ENCODE measurements at regions of chr6 and their contacts with region 1.

Region 1: GRCh38 chr6:34610819-34611477 is 54.8 kb upstream of the SPDEF start:
- DNase-seq: no peak
- ATAC-seq: no peak
- H3K4me3 Mint-ChIP-seq: no peak overlapping the region
- H3K27ac Mint-ChIP-seq: no peak overlapping the region
- H3K4me1 Mint-ChIP-seq: peaks cover 9% of the 10 kb centered on the region
- H3K27me3 Mint-ChIP-seq: no peaks in the 10 kb centered on the region
- CTCF ChIP-seq: no peak

Region 2: GRCh38 chr6:34055223-34055933 is 555.6 kb before region 1 on chr6:
- CTCF ChIA-PET with region 1: no interaction called
- POLR2A ChIA-PET with region 1: no interaction called
- intact Hi-C with region 1: loop called (anchors 5 kb)
- DNase-seq: peak; percentile 56
- ATAC-seq: peak; percentile 84
- H3K4me3 Mint-ChIP-seq: no peak overlapping the region
- H3K27ac Mint-ChIP-seq: no peak overlapping the region
- H3K4me1 Mint-ChIP-seq: no peaks in the 10 kb centered on the region
- H3K27me3 Mint-ChIP-seq: peaks cover 21% of the 10 kb centered on the region
- CTCF ChIP-seq: no peak

Region 3: DNA sequence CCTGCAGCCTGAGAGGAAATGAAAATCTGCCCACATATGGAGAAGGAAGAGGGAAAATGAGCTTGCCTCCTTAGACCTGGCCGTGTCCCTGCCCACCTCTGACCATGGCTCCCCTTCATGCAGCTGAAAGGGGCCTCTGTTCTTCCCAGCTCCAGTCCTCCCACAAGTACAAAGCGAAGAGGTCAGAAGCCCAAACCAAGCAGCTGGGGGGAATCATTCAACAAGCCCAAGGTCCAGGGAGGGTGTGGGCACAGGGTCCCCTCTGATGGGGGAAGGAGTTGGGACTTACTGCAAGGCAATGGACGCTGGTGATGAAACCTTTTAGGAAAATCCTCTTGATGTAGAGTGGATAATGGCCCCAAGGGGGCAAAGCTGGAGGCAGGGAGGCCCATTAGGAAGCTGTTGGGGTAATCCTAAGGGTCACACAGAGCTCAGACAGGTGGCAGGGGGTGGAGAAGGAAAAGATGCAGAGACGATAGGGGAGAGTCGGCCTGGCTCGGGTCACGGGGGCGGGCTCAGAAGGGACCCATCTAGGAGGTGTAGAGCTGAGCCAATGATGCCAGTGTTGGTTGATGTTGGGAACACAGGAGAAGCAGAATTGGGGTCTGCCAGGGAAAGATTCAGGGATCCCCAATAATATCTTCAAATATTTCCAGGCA is 449.0 kb before region 1 on chr6:
- CTCF ChIA-PET with region 1: interaction called, 31 read pairs
- POLR2A ChIA-PET with region 1: no interaction called
- intact Hi-C with region 1: loop called (anchors 1 kb)
- DNase-seq: peak; percentile 7
- ATAC-seq: no peak
- H3K4me3 Mint-ChIP-seq: no peak overlapping the region
- H3K27ac Mint-ChIP-seq: no peak overlapping the region
- H3K4me1 Mint-ChIP-seq: peaks cover 3% of the 10 kb centered on the region
- H3K27me3 Mint-ChIP-seq: no peaks in the 10 kb centered on the region
- CTCF ChIP-seq: no peak

Region 4: DNA sequence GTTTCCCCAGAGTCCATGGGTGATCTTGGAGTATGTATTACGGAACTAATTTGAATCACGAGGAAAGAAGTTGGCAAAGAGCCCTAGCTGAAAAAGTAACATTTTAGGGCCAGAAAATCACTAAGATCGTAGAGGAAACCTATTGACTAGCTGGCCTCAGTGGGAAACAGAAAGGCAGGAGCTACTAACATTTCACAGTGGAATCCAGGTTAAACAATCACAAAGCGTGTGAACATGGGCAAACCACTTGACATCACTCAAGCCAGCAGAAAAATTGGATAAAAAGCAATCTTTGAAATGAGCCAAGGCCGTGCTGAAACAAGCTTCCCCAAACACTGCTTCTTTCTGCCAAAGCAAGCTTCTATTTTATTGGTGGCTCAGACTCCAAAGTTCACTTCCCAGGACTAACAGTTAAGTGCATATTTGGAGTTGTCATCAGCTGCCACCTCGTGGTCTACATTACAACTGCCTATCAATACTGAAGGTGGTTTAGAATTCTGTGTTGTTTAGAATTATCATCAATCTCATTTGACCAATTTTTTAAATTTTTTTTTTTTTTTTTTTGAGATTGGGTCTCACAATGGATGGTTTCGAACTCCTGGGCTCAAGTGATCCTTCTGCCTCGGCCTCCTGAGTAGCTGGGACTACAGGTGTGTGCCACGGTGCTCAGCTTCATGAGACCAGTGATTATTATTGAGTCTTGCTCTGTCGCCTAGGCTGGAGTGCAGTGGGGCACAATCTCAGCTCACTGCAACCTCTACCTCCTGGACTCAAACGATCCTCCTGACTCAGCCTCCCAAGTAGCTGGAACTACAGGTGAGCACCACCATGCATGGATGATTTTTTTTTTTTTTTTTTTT is 195.7 kb before region 1 on chr6:
- CTCF ChIA-PET with region 1: interaction called, 18 read pairs
- POLR2A ChIA-PET with region 1: no interaction called
- intact Hi-C with region 1: loop called (anchors 1 kb)
- DNase-seq: no peak
- ATAC-seq: peak; percentile 83
- H3K4me3 Mint-ChIP-seq: no peak overlapping the region
- H3K27ac Mint-ChIP-seq: no peak overlapping the region
- H3K4me1 Mint-ChIP-seq: peaks cover 6% of the 10 kb centered on the region
- H3K27me3 Mint-ChIP-seq: no peaks in the 10 kb centered on the region
- CTCF ChIP-seq: no peak

Region 5: DNA sequence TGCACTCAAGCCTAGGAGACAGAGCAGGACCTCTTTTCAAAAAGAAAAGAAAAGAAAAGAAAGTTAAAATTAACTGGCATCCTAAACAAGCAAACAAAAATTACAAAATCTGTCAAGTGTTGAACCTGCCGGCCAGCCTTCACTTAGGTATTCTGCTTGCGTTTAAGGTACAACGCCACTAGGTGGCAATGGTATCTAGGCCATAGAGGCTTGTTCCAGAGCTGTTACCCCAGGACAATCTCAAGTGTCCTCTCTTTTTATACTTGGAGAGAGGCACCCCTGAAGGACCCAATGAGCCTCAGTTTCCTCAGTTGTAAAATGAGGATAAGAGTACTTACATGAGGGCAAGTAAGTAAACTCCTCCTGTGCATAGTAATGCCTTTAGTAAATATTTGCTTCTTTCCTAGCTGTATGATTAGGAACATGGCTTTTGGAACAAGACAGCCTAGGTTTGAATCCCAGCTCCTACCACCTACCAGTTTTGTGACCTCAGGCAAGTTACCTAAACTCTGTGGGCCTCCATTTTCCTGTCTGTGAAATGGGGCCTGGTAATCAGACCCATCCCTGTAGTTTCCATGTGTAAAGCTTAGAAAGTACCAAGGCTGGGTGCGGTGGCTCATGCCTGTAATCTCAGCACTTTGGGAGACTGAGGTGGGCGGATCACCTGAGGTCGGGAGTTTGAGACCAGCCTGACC is 150.9 kb before region 1 on chr6:
- CTCF ChIA-PET with region 1: interaction called, 91 read pairs
- POLR2A ChIA-PET with region 1: interaction called, 5 read pairs
- intact Hi-C with region 1: loop called (anchors 1 kb)
- DNase-seq: no peak
- ATAC-seq: peak; percentile 93
- H3K4me3 Mint-ChIP-seq: no peak overlapping the region
- H3K27ac Mint-ChIP-seq: no peak overlapping the region
- H3K4me1 Mint-ChIP-seq: peaks cover 1% of the 10 kb centered on the region
- H3K27me3 Mint-ChIP-seq: peaks cover 12% of the 10 kb centered on the region
- CTCF ChIP-seq: peak; percentile 19

Region 6: GRCh38 chr6:34526992-34527728 is 83.8 kb before region 1 on chr6:
- CTCF ChIA-PET with region 1: interaction called, 12 read pairs
- POLR2A ChIA-PET with region 1: no interaction called
- intact Hi-C with region 1: loop called (anchors 1 kb)
- DNase-seq: peak; percentile 92
- ATAC-seq: peak; percentile 98
- H3K4me3 Mint-ChIP-seq: peak overlapping the region; percentile 69
- H3K27ac Mint-ChIP-seq: peak overlapping the region; percentile 66
- H3K4me1 Mint-ChIP-seq: peaks cover 7% of the 10 kb centered on the region
- H3K27me3 Mint-ChIP-seq: no peaks in the 10 kb centered on the region
- CTCF ChIP-seq: no peak

Region 7: DNA sequence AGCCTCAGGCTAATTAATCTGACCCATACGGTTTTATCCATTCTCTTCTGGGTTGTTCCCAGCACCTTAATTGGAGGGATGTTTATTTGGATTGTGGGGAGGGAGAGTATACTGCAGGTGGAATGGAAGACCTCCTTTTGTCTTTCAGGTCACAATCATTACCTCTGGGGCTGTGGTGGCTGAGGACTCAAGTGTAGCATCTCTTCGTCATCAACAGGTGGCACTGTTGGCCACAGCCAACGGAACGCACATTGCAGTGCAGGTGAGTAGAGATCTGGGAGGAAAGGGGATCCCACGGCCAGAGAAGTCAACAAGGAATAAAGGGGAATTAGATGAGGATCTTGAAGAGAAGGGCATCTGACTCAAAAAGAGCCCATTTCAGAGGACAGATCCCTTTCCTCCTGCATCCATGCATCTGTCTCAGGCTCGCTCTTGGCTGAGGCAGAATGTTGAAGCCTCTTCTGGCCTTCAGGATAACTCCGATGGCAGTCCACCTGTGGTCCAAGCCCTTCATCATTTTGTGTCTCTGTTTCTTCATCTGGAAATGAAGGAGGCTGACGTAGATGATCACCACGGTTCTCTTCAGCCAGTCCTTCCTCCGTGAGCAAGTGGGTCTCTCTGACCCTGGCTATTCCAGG is 683.5 kb after region 1 on chr6:
- CTCF ChIA-PET with region 1: no interaction called
- POLR2A ChIA-PET with region 1: no interaction called
- intact Hi-C with region 1: no loop called
- DNase-seq: no peak
- ATAC-seq: peak; percentile 33
- H3K4me3 Mint-ChIP-seq: no peak overlapping the region
- H3K27ac Mint-ChIP-seq: peak overlapping the region; percentile 32
- H3K4me1 Mint-ChIP-seq: peaks cover 31% of the 10 kb centered on the region
- H3K27me3 Mint-ChIP-seq: no peaks in the 10 kb centered on the region
- CTCF ChIP-seq: no peak